Activated T-helper 2 cell treated with anti-CD3 and anti-CD28 coated beads, Interferon-gamma antibody, Interleukin-2, Interleukin-4, amounts not matched to agents 10 μg/mL and 5 μg/mL and 100 μg/mL, durations not matched to agents 14 hours and 24 hours and 36 hours (primary cell): ENCODE measurements at regions of chr19 and their contacts with region 1.

Region 1: GRCh38 chr19:46634045-46634655 is 1.9 kb downstream of the GNG8 start:
- DNase-seq: peak; percentile 94
- H3K4me3 Mint-ChIP-seq: peak overlapping the region; percentile 80
- H3K27ac Mint-ChIP-seq: peak overlapping the region; percentile 34
- H3K4me1 Mint-ChIP-seq: peaks cover 13% of the 10 kb centered on the region
- H3K27me3 Mint-ChIP-seq: peaks cover 2% of the 10 kb centered on the region

Region 2: GRCh38 chr19:46661020-46661731 is 27.0 kb after region 1 on chr19 and contains the start of gene DACT3:
- intact Hi-C with region 1: loop called (anchors 1 kb)
- DNase-seq: peak; percentile 100
- H3K4me3 Mint-ChIP-seq: peak within 1 kb of the TSS; percentile 81
- H3K27ac Mint-ChIP-seq: peak within 1 kb of the TSS; percentile 80
- H3K4me1 Mint-ChIP-seq: peaks cover 19% of the 10 kb centered on the region
- H3K27me3 Mint-ChIP-seq: peaks cover 26% of the 10 kb centered on the region
- total RNA-seq, gene DACT3: 6.1 and 6.5 TPM in 2 replicates